A673 (cell line): ENCODE measurements at regions of chr10 and their contacts with region 1.

Region 1: GRCh38 chr10:69179743-69180524 is at the start of gene SUPV3L1:
- DNase-seq: peak; percentile 98
- H3K4me3 ChIP-seq: peak within 1 kb of the TSS; percentile 87
- H3K27ac ChIP-seq: peak within 1 kb of the TSS; percentile 97
- H3K4me1 ChIP-seq: peaks cover 9% of the 10 kb centered on the region
- H3K27me3 ChIP-seq: no peaks in the 10 kb centered on the region
- CTCF ChIP-seq: no peak
- total RNA-seq, gene SUPV3L1: 54.3 and 55.3 TPM in 2 replicates

Region 2: DNA sequence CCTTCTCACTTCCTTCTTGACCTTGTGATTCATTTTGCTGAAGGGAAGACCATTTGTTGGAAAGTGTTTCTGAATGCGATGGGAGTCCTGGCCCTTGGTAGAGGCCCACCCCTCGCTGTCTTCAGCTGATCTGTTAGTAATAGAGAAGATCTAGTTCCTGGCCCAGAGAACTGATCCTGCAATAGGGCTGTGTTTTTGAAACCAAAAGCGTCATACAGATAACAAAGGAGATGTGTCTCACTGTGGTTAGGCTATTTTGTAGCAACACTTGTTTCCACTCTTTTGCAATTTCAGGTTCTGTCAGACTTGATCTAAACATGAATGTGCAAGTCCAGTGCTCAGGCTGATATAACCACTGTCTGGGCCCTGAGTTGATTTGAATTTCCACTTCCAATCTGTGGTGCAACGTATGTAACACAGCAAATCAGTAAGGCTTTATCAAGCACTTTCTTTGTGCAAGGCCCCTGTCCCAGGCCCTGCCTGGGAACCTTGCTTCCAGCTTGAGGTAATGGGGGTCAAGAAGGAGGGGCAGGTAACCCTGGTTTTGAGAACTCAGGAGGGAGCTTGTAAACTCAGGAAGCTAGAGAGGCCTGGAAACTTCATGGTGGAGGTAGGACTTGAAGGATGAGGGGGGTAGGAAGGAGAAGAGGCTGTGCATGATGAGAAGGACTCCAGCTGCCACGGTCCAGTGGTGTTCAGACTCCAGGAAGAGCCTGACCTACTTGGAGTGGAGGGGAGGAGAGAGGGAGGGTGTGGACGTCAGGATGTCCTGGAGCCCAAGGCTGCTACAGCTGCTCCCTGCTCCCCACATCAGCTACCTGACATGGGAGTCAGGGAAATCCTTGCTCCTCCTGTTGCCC is 134.3 kb before region 1 on chr10:
- CTCF ChIA-PET with region 1: no interaction called
- POLR2A ChIA-PET with region 1: no interaction called
- intact Hi-C with region 1: no loop called
- DNase-seq: no peak
- H3K4me3 ChIP-seq: no peak overlapping the region
- H3K27ac ChIP-seq: no peak overlapping the region
- H3K4me1 ChIP-seq: no peaks in the 10 kb centered on the region
- H3K27me3 ChIP-seq: no peaks in the 10 kb centered on the region
- CTCF ChIP-seq: no peak

Region 3: GRCh38 chr10:69123747-69124562 is 56.0 kb before region 1 on chr10 and contains the start of gene VPS26A:
- CTCF ChIA-PET with region 1: no interaction called
- POLR2A ChIA-PET with region 1: no interaction called
- intact Hi-C with region 1: loop called (anchors 5 kb)
- DNase-seq: peak; percentile 99
- H3K4me3 ChIP-seq: peak within 1 kb of the TSS; percentile 98
- H3K27ac ChIP-seq: peak within 1 kb of the TSS; percentile 92
- H3K4me1 ChIP-seq: peaks cover 4% of the 10 kb centered on the region
- H3K27me3 ChIP-seq: no peaks in the 10 kb centered on the region
- CTCF ChIP-seq: peak; percentile 56; the same call in 1 of the 2 replicates
- total RNA-seq, gene VPS26A: 80.1 and 82.1 TPM in 2 replicates

Region 4: GRCh38 chr10:69222157-69223027 is 42.5 kb after region 1 on chr10:
- CTCF ChIA-PET with region 1: no interaction called
- POLR2A ChIA-PET with region 1: no interaction called
- intact Hi-C with region 1: loop called (anchors 1 kb)
- DNase-seq: peak; percentile 81
- H3K4me3 ChIP-seq: no peak overlapping the region
- H3K27ac ChIP-seq: peak overlapping the region; percentile 33
- H3K4me1 ChIP-seq: peaks cover 21% of the 10 kb centered on the region
- H3K27me3 ChIP-seq: no peaks in the 10 kb centered on the region
- CTCF ChIP-seq: peak; percentile 82

Region 5: GRCh38 chr10:69278446-69278963 is 98.6 kb after region 1 on chr10 and contains the start of gene HK1:
- CTCF ChIA-PET with region 1: no interaction called
- POLR2A ChIA-PET with region 1: no interaction called
- intact Hi-C with region 1: no loop called
- DNase-seq: no peak
- H3K4me3 ChIP-seq: no peak within 1 kb of the TSS
- H3K27ac ChIP-seq: no peak within 1 kb of the TSS
- H3K4me1 ChIP-seq: no peaks in the 10 kb centered on the region
- H3K27me3 ChIP-seq: no peaks in the 10 kb centered on the region
- CTCF ChIP-seq: no peak
- total RNA-seq, gene HK1: 106 and 107 TPM in 2 replicates